ENCODE measurements at regions of chr19 and their contacts with region 1.

Region 1: DNA sequence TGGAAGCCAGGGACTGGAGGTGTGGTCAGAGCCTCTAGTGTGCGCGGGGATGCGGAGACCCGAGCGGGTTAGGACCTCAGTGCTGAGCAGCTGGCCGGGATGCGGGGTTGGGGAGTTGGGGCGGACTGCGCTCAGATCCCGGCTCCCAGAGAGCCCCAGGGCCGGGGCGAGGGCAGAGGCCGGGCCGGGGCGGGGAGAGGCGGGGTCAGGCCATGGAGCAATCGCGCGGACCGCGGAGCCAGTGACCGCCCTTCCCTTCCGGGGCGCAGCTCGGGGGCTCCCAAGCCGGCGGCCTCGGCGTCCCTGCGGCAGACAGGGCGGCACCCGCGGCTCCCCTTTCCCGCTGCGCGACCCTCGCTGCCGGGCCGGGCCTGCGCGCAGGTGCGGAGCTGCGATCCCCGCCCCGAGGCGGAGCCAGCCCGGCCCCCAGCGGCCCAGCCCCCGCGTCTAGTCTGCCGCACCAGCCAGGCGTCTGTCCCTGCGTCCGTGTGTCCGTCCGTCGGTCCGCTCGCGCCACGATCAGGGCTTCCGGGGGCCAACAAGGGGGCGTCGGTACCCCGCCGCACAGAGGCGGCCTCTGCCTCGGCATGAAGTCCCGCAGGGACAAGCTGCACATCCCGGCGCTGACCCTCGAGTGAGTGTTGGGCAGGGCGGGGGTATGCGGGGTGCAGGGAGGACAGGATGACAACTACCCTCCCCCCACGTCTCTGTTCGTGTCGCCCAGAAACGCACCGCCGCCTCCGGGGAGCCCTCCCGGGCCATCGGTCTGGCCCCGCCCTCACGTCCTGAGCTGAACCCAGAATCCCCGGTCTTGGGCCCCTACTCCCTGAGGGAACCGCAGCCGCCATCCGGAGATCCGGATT is 12.4 kb downstream of the MAST3 start:
- DNase-seq: peak; percentile 57
- ATAC-seq: peak; percentile 78
- H3K4me3 Mint-ChIP-seq: peak overlapping the region; percentile 72
- H3K27ac Mint-ChIP-seq: no peak overlapping the region
- H3K4me1 Mint-ChIP-seq: peaks cover 20% of the 10 kb centered on the region
- H3K27me3 Mint-ChIP-seq: no peaks in the 10 kb centered on the region
- CTCF ChIP-seq: no peak

Region 2: GRCh38 chr19:18029617-18030338 is 80.2 kb before region 1 on chr19:
- CTCF ChIA-PET with region 1: no interaction called
- POLR2A ChIA-PET with region 1: no interaction called
- intact Hi-C with region 1: no loop called
- DNase-seq: peak; percentile 15
- ATAC-seq: peak; percentile 24
- H3K4me3 Mint-ChIP-seq: no peak overlapping the region
- H3K27ac Mint-ChIP-seq: no peak overlapping the region
- H3K4me1 Mint-ChIP-seq: peaks cover 13% of the 10 kb centered on the region
- H3K27me3 Mint-ChIP-seq: no peaks in the 10 kb centered on the region
- CTCF ChIP-seq: no peak

Region 3: GRCh38 chr19:18091217-18091608 is 18.8 kb before region 1 on chr19:
- CTCF ChIA-PET with region 1: interaction called, 10 read pairs
- POLR2A ChIA-PET with region 1: interaction called, 11 read pairs
- intact Hi-C with region 1: no loop called
- DNase-seq: peak; percentile 96
- ATAC-seq: peak; percentile 67
- H3K4me3 Mint-ChIP-seq: peak overlapping the region; percentile 46
- H3K27ac Mint-ChIP-seq: peak overlapping the region; percentile 94
- H3K4me1 Mint-ChIP-seq: peaks cover 58% of the 10 kb centered on the region
- H3K27me3 Mint-ChIP-seq: no peaks in the 10 kb centered on the region
- CTCF ChIP-seq: no peak

Region 4: DNA sequence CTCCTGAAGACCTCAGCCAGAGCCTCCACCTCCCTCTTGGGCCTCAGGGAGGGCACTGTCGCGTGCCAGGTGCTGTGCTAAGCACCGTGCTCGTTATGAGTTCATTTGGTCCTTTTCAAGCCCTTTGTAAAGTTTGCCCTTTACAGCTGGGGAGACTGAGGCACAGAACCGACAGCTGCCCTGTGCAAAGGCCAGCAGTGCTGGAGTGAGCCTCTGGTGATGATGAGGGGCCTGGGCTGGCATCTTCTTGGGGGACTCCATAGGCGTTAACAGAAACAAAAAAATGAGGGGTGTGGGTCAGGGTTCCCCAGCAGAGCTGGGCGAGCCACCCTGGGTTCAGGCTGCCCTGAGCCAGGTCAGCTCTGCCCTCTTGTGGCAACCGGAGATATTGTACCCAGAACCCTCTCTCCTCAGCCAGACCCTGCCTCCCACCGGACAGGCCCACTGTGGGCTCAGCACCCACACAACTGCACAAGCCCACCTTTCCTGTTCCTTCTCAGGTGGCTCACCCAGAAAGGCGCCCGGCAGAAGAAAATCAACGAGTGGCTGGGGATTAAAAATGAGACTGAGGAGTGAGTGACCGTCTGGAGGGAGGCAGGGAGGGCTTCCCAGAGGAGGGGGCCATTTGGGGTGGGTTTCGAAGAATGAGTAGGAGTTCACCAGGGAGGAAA is 58.1 kb after region 1 on chr19:
- CTCF ChIA-PET with region 1: interaction called, 16 read pairs
- POLR2A ChIA-PET with region 1: interaction called, 3 read pairs
- intact Hi-C with region 1: loop called (anchors 5 kb)
- DNase-seq: peak; percentile 76
- ATAC-seq: peak; percentile 99
- H3K4me3 Mint-ChIP-seq: no peak overlapping the region
- H3K27ac Mint-ChIP-seq: no peak overlapping the region
- H3K4me1 Mint-ChIP-seq: peaks cover 4% of the 10 kb centered on the region
- H3K27me3 Mint-ChIP-seq: no peaks in the 10 kb centered on the region
- CTCF ChIP-seq: peak; percentile 88